Activated CD8-positive, alpha-beta T cell treated with anti-CD3 and anti-CD28 coated beads, Interleukin-2, amount 10 ng/mL, durations not matched to agents 7 days and 5 days (primary cell): ENCODE measurements at regions of chr11 and their contacts with region 1.

Region 1: DNA sequence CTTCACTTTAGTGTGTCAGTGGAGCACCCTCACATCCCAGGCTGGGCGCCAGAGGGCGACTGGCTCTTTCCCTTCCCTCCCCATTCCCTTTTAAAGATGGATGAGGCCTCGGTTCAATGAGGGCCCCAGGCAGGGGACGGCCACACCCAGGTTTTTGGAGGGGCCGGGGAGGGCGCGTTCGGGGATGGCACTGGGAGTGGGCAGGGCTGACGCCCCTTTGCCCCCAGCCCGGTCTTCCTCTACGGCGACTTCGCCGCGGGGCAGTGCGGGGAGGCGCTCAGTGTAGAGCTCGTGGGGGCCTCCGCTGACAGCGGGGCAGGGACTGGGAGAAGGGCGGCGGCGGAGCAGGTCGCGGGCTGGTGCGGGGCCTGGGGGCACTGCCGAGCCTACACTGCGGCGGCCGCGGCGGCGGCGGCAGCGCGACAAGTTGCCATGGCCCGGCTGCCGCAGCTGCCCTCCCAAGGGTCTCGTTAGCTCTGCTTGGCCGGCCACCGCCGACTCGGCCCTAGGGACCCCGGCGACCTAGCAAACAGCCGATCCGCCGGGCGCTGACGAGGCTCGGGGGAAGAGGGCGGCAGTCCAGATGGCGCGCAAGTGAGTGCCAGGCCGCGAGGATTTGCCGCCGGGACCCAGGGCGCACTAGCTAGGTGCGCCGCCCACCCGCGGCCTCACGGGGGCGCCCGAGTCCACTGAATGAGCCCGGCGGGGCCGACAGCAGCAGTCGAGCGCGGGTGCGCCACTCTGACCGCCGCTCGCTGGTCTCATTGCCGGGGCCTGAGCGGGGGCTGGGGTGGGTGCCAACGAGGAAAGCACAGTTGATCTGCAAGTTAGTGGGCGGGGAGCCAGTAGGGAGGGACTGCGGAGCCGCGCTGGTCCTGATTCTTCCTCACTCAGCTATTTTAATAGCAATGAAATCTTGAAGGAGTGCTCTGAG is 92.7 kb downstream of the RRM1 start:
- DNase-seq: peak; percentile 86
- ATAC-seq: peak; percentile 95
- H3K4me3 Mint-ChIP-seq: peak overlapping the region; percentile 73
- H3K27ac Mint-ChIP-seq: no peak overlapping the region
- H3K4me1 Mint-ChIP-seq: peaks cover 17% of the 10 kb centered on the region
- H3K27me3 Mint-ChIP-seq: peaks cover 7% of the 10 kb centered on the region

Region 2: DNA sequence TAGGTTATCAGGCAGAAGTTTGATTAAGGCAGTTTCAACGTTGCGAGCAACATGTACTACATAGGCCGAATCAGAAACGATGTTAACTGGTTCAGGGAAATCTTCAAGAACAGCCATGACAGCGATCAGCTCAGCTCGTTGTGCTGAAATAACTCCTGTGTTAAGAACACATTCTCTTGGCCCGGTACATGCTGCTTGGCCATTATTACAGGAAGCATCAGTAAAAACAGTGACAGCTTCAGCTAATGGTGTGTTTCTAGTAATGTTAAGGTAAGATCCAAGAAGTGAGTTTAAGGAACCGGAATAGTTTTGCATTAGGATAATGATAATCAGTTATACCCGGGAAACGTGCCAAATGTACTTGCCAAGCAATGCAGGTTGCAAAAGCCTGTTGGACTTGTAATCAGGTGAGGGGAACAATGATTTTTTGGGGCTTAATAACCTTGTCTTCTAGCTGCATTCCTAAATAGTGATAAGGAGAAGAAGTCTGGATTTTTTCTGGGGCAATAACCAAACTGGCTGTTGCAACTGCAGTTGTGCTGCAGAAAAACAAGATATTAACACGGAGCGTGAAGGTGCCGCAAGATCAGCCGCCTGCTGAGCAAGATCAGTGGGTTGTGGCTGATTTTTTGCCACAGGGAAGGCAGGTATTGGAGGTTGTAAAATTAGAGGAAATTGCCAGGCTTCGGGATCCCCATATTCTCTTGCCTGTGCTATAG is 309.4 kb after region 1 on chr11:
- CTCF ChIA-PET with region 1: interaction called, 79 read pairs
- POLR2A ChIA-PET with region 1: no interaction called
- DNase-seq: no peak
- ATAC-seq: no peak
- H3K4me3 Mint-ChIP-seq: no peak overlapping the region
- H3K27ac Mint-ChIP-seq: no peak overlapping the region
- H3K4me1 Mint-ChIP-seq: no peaks in the 10 kb centered on the region
- H3K27me3 Mint-ChIP-seq: peaks cover 22% of the 10 kb centered on the region

Region 3: GRCh38 chr11:4551346-4551979 is 364.1 kb after region 1 on chr11:
- CTCF ChIA-PET with region 1: interaction called, 109 read pairs
- POLR2A ChIA-PET with region 1: no interaction called
- DNase-seq: no peak
- ATAC-seq: no peak
- H3K4me3 Mint-ChIP-seq: no peak overlapping the region
- H3K27ac Mint-ChIP-seq: no peak overlapping the region
- H3K4me1 Mint-ChIP-seq: no peaks in the 10 kb centered on the region
- H3K27me3 Mint-ChIP-seq: peaks cover 8% of the 10 kb centered on the region

Region 4: DNA sequence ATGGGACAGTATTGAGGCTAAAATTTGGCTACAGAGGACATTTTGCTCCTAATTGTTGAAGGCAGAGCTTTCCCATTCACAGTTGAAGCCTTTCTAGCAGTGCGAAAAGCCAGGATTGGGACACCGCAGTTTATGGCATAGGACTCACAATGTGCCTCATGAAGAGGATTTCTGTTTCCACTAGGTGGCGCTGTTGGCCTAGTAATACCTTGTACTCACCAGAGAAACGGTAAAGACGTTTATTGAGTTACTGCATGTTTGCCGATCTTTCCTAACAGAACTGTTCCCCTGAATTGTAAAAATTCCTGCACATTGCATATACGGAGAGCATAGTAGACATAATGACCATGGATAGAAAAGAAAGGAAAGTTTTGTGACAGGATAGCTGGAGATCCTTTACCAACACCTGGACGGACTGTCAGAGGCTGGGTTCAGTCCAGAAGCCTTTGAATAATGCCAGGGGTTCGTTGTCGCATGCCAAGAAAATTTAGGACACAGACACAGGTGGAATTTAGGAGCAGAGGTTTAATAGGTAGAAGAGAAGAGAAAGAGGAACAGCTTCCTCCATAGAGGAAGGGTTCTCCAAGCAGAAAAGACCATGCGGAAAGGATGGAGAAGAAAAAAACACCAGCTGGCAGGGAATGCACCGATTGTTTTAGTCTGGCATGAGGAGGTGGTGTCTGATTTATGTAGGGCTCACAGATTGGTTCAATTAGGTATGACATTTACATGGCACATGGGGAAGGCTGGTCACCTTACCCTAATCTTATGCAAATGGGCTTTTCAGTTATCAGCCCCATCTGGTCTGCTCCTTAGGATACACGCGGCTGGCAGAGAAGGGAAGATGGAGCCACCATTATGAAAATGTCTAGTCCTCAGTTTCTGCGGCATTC is 439.1 kb after region 1 on chr11:
- CTCF ChIA-PET with region 1: interaction called, 10 read pairs
- POLR2A ChIA-PET with region 1: no interaction called
- DNase-seq: peak; percentile 82
- ATAC-seq: peak; percentile 57
- H3K4me3 Mint-ChIP-seq: no peak overlapping the region
- H3K27ac Mint-ChIP-seq: no peak overlapping the region
- H3K4me1 Mint-ChIP-seq: no peaks in the 10 kb centered on the region
- H3K27me3 Mint-ChIP-seq: peaks cover 32% of the 10 kb centered on the region